Left ventricle myocardium superior (tissue), 1 donor: ENCODE measurements at regions of chr5 and their contacts with region 1.

Region 1: GRCh38 chr5:139633295-139634027 is 14.7 kb upstream of the CXXC5 start:
- DNase-seq: peak; percentile 70
- ATAC-seq: peak; percentile 16

Region 2: DNA sequence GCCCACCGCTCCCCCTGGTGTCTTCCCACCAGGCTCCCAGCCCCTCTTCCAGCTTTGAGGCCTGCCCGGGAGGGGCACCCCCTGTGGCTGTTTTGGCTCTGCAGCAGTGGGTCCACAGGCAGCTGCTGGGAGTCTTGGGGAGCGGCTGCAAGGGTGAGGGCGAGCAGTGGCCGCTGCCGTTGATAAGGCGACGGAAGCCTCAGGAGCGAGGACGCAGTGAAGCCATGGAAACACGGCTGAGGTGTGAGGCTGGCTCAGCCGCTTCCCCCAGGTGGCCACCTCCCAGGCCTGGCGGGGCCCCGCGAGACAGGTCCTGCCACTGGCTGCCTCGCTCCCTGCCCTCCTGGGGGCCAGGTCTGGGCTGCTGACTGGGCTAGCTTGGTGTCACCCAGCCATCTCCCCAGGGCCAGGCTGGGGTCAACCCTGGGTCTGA is 56.2 kb after region 1 on chr5:
- intact Hi-C with region 1: loop called (anchors 5 kb)
- DNase-seq: peak; percentile 47
- ATAC-seq: peak; percentile 1

Region 3: DNA sequence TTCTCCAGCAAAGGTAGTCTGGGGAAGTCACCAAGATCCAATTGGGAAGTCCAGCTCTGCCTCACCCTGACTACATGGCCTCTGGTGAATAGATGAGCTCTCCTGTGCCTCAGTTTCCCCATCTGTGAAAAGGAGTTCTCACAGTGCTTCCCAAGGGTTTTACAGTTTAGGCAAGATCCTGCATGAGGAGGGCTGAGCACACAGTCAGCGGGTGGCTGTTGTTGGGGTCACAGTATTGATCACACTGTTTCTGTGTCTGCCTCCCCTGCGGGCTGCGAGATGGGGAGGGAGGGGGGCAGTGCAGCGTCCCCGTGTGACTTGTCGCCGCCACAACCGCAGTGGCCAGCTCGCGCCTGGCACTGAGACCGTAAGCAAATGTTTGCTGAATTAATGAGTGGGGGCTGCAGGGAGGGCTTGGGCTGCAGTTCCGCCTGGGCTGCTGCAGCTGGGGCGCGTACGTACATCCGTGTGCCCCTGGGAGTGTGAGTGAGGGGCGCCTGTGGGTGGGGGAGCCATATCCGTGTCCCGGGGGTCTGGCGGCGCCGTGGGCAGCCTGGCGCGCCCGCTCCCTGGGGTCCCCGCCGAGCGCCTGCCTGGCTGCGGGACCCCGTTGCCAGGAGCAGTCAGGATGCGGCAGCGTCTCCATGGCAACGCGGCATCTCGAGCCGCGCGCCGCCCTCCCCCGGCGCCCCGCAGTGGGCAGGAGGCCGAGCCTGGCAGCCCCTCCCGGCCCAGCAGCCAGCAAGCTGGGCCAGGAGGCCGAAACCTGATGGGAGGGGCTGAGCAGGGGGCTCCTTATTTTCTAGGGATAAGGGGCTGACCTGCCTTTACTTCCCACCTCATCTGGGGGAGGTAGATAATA is 130.7 kb after region 1 on chr5:
- intact Hi-C with region 1: loop called (anchors 5 kb)
- DNase-seq: peak; percentile 42
- ATAC-seq: no peak